Left cardiac atrium (tissue), 4 donors: ENCODE measurements at regions of chr20 and their contacts with region 1.

Region 1: GRCh38 chr20:324177-325044 is 941 bp upstream of the SOX12 start:
- DNase-seq: peak; percentile 94
- ATAC-seq: peak; percentile 73 to 85

Region 2: GRCh38 chr20:297925-298765 is 26.3 kb before region 1 on chr20:
- intact Hi-C with region 1: loop called in 1 of 2 experiments (anchors 2 kb)
- DNase-seq: peak; percentile 78
- ATAC-seq: peak; percentile 62 to 63

Region 3: GRCh38 chr20:309841-310644 is 14.4 kb before region 1 on chr20:
- intact Hi-C with region 1: loop called in 1 of 2 experiments (anchors 1 kb)
- DNase-seq: peak; percentile 99
- ATAC-seq: peak; percentile 100